A673 (cell line): ENCODE measurements at regions of chr2 and their contacts with region 1.

Region 1: GRCh38 chr2:3899536-3900155 is 196.3 kb downstream of the DCDC2C start:
- DNase-seq: peak; percentile 77
- H3K4me3 ChIP-seq: no peak overlapping the region
- H3K27ac ChIP-seq: peak overlapping the region; percentile 37
- H3K4me1 ChIP-seq: peaks cover 14% of the 10 kb centered on the region
- H3K27me3 ChIP-seq: no peaks in the 10 kb centered on the region
- CTCF ChIP-seq: no peak

Region 2: GRCh38 chr2:3575534-3576262 is 323.9 kb before region 1 on chr2:
- CTCF ChIA-PET with region 1: no interaction called
- POLR2A ChIA-PET with region 1: no interaction called
- intact Hi-C with region 1: no loop called
- DNase-seq: no peak
- H3K4me3 ChIP-seq: peak overlapping the region; percentile 68
- H3K27ac ChIP-seq: peak overlapping the region; percentile 93
- H3K4me1 ChIP-seq: peaks cover 16% of the 10 kb centered on the region
- H3K27me3 ChIP-seq: no peaks in the 10 kb centered on the region
- CTCF ChIP-seq: no peak

Region 3: GRCh38 chr2:3919622-3920021 is 20.0 kb after region 1 on chr2:
- CTCF ChIA-PET with region 1: no interaction called
- POLR2A ChIA-PET with region 1: interaction called, 16 read pairs
- intact Hi-C with region 1: no loop called
- DNase-seq: no peak
- H3K4me3 ChIP-seq: no peak overlapping the region
- H3K27ac ChIP-seq: no peak overlapping the region
- H3K4me1 ChIP-seq: peaks cover under 1% of the 10 kb centered on the region
- H3K27me3 ChIP-seq: no peaks in the 10 kb centered on the region
- CTCF ChIP-seq: no peak

Region 4: GRCh38 chr2:4272261-4272858 is 372.7 kb after region 1 on chr2:
- CTCF ChIA-PET with region 1: no interaction called
- POLR2A ChIA-PET with region 1: interaction called, 10 read pairs
- intact Hi-C with region 1: no loop called
- DNase-seq: no peak
- H3K4me3 ChIP-seq: no peak overlapping the region
- H3K27ac ChIP-seq: no peak overlapping the region
- H3K4me1 ChIP-seq: no peaks in the 10 kb centered on the region
- H3K27me3 ChIP-seq: no peaks in the 10 kb centered on the region
- CTCF ChIP-seq: no peak